ENCODE measurements at regions of chr17 and their contacts with region 1.

Region 1: DNA sequence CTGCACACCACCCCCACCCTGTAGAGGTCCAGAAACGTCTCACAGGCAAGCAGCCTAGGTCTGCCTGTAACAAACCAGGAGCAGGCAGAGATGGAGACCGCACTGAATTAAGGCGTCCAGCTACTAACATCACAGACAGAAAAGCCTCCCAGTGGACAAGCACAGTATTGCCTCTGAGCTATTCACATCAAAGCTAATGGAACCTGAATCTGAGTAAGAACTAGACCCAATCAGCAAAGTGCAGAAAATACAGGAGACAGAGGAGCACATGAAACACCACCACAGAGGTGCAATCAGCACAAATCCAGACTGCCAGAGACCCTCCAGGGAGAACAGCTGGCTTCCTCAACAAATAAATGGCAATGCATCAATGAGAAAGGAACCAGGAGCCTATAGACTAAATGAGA is 22.2 kb upstream of the PEMT start:
- DNase-seq: peak in 1 of 2 donors; percentile 29
- H3K4me3 ChIP-seq: no peak overlapping the region
- H3K27ac ChIP-seq: no peak overlapping the region
- H3K4me1 ChIP-seq: no peaks in the 10 kb centered on the region
- H3K27me3 ChIP-seq: no peaks in the 10 kb centered on the region
- CTCF ChIP-seq: peak; percentile 71 to 84 (median 80)
- POLR2A ChIP-seq: no peak

Region 2: GRCh38 chr17:17041571-17042380 is 571.9 kb before region 1 on chr17:
- intact Hi-C with region 1: no loop called
- DNase-seq: peak; percentile 98
- H3K4me3 ChIP-seq: peak overlapping the region; percentile 51 to 87 (median 69)
- H3K27ac ChIP-seq: peak overlapping the region; percentile 12 to 57
- H3K4me1 ChIP-seq: peaks cover 0 to 7% of the 10 kb centered on the region in 2 donors
- H3K27me3 ChIP-seq: no peaks in the 10 kb centered on the region
- CTCF ChIP-seq: no peak
- POLR2A ChIP-seq: no peak

Region 3: DNA sequence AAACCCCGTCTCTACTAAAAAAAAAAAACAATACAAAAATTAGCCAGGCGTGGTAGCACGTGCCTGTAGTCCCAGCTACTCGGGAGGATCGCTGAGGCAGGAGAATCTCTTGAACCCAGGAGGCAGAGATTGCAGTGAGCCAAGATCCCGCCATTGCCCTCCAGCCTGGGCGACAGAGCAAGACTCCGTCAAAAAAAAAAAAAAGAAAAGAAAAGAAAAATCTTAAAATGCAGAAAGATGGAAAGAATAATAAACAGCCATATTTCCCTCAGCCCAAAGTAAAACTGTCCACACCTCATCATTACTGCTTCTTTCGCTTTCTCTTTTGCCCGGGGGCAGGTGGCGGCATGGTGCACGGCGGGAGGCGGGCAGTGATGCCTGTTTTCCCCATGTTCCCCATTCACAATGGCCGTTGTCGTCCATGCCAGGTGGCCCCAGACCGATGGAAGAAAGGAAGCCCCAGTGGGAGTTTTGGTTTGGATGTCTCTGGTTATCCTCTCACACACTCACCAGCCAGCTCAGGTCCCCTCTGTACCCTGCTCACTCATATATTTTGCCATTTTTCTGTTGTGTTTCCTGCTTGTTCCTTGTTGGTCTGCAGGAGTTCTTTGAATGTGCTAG is 14.8 kb after region 1 on chr17:
- intact Hi-C with region 1: loop called (anchors 1 kb)
- DNase-seq: peak in 1 of 2 donors; percentile 39
- H3K4me3 ChIP-seq: peak overlapping the region in 2 of 3 donors; percentile 30 to 54
- H3K27ac ChIP-seq: no peak overlapping the region
- H3K4me1 ChIP-seq: no peaks in the 10 kb centered on the region
- H3K27me3 ChIP-seq: no peaks in the 10 kb centered on the region
- CTCF ChIP-seq: no peak
- POLR2A ChIP-seq: no peak